SK-N-SH (cell line): ENCODE measurements at regions of chr10 and their contacts with region 1.

Region 1: GRCh38 chr10:29257106-29257783 is 31.6 kb upstream of the LYZL1 start:
- DNase-seq: no peak
- H3K4me3 ChIP-seq: no peak overlapping the region
- H3K27ac ChIP-seq: peak overlapping the region in 1 of 2 experiments; percentile 93; a peak in 2 of 4 replicates
- H3K4me1 ChIP-seq: peaks cover 27 to 46% of the 10 kb centered on the region in 2 experiments
- H3K27me3 ChIP-seq: peaks cover 5% of the 10 kb centered on the region; the same call in 1 of the 2 replicates
- CTCF ChIP-seq: no peak
- EP300 ChIP-seq: no peak
- RAD21 ChIP-seq: no peak

Region 2: DNA sequence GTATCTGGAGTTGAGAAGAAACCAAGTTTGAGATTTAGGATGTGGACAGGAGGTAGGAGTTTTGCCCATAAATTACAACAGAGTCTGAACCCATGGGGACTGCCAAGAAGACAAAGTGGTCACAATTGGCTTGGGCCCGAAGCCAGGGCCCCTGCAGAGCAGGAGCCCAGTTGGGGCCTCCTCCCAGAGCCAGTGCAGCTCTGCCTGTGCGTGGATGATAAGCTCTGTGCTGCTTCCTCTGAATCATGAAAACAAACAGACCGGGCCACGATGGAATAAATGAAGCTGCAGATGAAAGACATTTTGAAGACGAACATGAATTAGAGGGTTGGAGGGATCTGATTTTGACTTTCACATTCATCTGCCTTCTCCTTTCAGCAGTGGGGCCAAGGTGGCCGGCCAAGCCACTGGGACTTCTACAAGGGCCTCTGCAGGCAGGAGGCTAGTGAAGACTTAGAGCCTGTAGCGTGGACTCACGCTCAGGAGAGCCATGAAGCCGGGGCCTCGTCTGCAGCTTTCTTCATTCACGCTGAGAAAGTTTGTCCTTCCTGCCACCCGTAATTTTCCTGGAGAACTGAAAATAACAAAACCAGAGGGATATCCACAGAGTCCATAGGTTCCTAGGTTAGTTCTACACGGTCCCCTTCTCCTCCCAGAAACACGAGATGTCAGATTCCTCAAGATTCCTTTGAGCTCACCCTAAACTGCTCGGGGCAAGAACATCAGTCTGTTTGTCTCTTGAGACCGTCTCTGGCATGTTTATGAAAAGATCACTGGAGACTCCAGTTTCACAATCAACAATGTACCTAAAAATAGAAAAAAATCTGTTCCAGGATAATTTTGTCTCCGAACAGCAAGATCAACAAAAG is 125.1 kb before region 1 on chr10:
- CTCF ChIA-PET with region 1: interaction called, 10 read pairs
- POLR2A ChIA-PET with region 1: no interaction called
- DNase-seq: no peak
- H3K4me3 ChIP-seq: no peak overlapping the region
- H3K27ac ChIP-seq: no peak overlapping the region
- H3K4me1 ChIP-seq: peaks cover 7 to 10% of the 10 kb centered on the region in 2 experiments; a peak in 3 of 4 replicates
- H3K27me3 ChIP-seq: no peaks in the 10 kb centered on the region; the same call in 1 of the 2 replicates
- CTCF ChIP-seq: no peak
- EP300 ChIP-seq: no peak
- RAD21 ChIP-seq: no peak

Region 3: GRCh38 chr10:29239569-29240472 is 17.4 kb before region 1 on chr10:
- CTCF ChIA-PET with region 1: interaction called, 13 read pairs
- POLR2A ChIA-PET with region 1: no interaction called
- DNase-seq: peak; percentile 52
- H3K4me3 ChIP-seq: no peak overlapping the region
- H3K27ac ChIP-seq: no peak overlapping the region
- H3K4me1 ChIP-seq: peaks cover 0 to 5% of the 10 kb centered on the region in 2 experiments; a peak in 1 of 4 replicates
- H3K27me3 ChIP-seq: no peaks in the 10 kb centered on the region
- CTCF ChIP-seq: peak; percentile 55
- EP300 ChIP-seq: no peak
- RAD21 ChIP-seq: peak; percentile 65